ENCODE measurements at regions of chrX and their contacts with region 1.

Region 1: GRCh38 chrX:110450050-110450449 is 91.4 kb downstream of the RTL9 start:
- DNase-seq: peak; percentile 70
- H3K4me3 ChIP-seq: no peak overlapping the region
- H3K27ac ChIP-seq: no peak overlapping the region
- H3K4me1 ChIP-seq: no peaks in the 10 kb centered on the region
- H3K27me3 ChIP-seq: no peaks in the 10 kb centered on the region
- CTCF ChIP-seq: peak; percentile 26 to 72 (median 56)
- POLR2A ChIP-seq: no peak

Region 2: DNA sequence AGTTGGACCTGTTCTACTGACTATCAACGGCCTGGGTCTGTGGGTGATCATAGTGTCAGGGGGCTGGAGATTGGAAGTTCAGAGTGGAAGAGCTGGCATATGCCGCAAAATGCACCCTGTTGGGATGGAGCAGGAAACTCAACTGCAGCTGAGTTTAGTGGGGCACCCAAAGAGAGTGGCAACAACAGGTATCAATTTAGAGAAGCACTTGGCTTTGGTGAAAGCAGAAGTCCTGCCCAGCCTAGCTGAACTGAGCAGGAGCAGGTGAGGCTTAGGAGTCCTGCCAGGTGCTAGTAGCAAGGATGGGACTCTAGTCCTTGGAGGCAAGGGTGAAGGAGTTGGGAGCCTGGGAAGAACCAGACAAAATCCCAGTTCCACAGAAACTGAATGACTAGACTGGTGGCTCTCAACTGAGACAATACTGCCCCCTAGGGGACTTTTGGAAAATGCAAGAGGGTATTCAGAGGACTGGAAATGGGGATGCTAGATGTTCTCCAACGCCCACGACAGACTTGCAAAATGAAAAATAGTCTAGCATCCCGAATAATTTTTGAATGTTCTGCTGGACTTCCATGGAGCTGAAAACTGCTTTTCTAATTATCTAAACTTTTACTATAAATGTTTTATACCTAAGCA is 42.0 kb before region 1 on chrX:
- intact Hi-C with region 1: no loop called
- DNase-seq: peak; percentile 44
- H3K4me3 ChIP-seq: no peak overlapping the region
- H3K27ac ChIP-seq: no peak overlapping the region
- H3K4me1 ChIP-seq: no peaks in the 10 kb centered on the region
- H3K27me3 ChIP-seq: no peaks in the 10 kb centered on the region
- CTCF ChIP-seq: peak in 3 of 4 experiments; percentile 61 to 69 (median 65)
- POLR2A ChIP-seq: no peak

Region 3: DNA sequence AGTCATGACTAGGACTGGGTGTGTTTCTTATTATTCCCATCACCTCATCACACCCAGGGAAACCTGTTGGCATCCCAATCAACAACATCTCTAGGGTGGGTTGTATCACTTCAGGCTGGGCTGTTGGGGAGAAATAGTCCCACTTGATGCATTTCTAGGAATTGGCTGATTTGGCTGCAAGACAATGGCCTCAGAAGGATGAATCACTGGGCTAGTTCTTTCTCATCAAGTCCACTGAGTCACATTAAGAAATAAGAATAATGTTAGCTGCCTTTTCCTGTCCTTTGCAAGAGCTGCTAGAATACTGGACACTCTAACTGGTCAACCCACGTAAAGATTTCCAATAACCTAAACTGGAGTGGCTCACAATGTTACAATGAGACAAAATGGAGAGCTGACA is 241.4 kb after region 1 on chrX:
- intact Hi-C with region 1: no loop called
- DNase-seq: no peak
- H3K4me3 ChIP-seq: no peak overlapping the region
- H3K27ac ChIP-seq: no peak overlapping the region
- H3K4me1 ChIP-seq: no peaks in the 10 kb centered on the region
- H3K27me3 ChIP-seq: no peaks in the 10 kb centered on the region
- CTCF ChIP-seq: no peak
- POLR2A ChIP-seq: no peak

Region 4: DNA sequence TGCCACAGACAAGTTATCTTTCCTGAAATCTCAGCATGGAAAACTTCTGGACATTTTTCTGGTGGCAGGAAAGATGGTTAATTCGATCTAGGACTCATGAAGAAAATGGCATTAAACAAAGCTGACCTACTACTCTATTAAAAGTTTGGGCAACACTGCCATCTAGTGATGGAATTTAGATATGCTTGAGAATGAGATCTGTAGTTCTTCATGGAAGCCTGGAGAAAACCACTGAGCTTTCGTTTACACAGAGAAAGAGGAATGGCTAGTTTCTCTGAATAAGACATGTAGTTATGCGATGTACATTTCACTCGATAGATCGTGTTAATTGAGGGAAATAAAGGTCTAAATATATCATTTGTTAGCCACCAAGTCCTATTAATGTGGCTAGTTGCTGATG is 397.3 kb after region 1 on chrX:
- intact Hi-C with region 1: loop called (anchors 1 kb)
- DNase-seq: peak; percentile 17
- H3K4me3 ChIP-seq: no peak overlapping the region
- H3K27ac ChIP-seq: no peak overlapping the region
- H3K4me1 ChIP-seq: no peaks in the 10 kb centered on the region
- H3K27me3 ChIP-seq: no peaks in the 10 kb centered on the region
- CTCF ChIP-seq: peak in 3 of 4 experiments; percentile 52 to 65 (median 57)
- POLR2A ChIP-seq: no peak

Measured in prostate gland (tissue), 2 donors.